HEK293T (cell line): ENCODE measurements at regions of chr17 and their contacts with region 1.

Region 1: DNA sequence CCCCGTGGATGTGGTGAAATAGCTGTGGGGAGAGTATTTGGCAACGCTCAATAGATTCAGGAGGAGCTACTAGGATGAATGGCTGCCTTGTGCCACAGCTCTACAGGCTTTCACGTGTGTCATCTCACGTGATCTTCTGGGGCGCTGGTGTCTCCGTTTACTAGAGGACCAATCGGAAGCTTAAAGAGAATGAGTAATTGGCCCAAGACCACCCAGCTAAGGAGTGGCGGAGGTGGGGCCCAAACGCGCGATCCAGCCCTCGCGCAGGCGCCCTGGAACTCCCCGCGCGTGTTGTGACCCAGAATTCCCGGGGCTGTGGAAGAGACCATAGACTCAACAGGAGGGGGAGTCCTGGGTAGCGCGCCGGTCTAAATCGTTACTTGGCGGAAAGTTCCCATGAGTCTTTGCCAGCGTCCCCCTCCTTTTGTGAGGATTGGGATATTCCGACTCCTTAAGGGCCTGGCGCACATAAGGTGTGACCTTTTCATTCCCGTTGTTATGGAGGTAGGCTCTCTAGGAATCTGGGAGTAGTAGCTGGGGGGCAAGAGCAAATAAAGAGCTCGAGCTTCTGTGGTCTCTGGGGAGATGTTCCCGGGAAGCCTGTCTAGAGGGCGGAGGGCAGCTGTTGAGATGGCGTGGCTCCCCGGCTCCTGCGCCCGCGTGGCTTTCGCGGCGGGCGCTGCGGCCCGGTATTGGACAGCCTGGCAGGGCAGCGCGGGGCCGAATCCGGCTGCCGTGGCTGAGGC is 23.4 kb downstream of the TRPV2 start:
- DNase-seq: peak; percentile 98

Region 2: GRCh38 chr17:16363749-16364536 is 74.8 kb before region 1 on chr17:
- CTCF ChIA-PET with region 1: interaction called, 9 read pairs
- POLR2A ChIA-PET with region 1: interaction called, 15 read pairs
- DNase-seq: peak; percentile 74

Region 3: DNA sequence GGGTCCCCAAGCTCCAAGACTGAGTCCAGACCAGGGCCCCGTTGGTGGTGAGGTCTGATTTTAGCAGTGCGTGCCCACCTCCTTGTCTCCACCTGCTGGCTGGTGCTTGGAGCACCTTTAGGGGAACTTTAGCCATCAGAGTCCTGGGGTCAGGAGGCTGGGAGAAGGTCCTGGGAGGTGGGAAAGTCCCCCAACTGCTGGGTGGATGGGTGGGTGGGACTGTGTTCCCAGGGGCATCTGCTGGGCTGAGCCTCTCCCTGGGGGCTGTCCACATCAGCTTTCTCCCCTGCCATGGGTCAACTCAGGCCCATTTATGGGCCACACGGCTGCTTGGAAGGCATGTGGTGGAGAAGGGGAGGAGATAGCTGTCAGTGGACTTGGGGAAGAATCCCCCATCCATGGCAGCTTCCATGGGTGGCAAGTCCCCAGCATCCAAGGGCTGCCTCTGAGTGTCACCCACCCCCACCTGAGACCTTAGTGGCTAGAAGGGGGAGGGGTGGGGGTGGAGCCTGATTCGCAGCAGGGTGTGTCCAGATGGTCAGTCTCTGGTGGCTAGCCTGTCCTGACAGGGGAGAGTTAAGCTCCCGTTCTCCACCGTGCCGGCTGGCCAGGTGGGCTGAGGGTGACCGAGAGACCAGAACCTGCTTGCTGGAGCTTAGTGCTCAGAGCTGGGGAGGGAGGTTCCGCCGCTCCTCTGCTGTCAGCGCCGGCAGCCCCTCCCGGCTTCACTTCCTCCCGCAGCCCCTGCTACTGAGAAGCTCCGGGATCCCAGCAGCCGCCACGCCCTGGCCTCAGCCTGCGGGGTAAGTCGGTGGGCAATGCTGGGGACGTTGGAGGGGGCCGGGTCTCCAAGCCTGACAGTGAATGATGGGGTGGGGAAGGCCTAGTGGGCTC is 23.5 kb before region 1 on chr17 and contains the start of gene TRPV2:
- CTCF ChIA-PET with region 1: no interaction called
- POLR2A ChIA-PET with region 1: interaction called, 104 read pairs
- DNase-seq: peak; percentile 54

Region 4: DNA sequence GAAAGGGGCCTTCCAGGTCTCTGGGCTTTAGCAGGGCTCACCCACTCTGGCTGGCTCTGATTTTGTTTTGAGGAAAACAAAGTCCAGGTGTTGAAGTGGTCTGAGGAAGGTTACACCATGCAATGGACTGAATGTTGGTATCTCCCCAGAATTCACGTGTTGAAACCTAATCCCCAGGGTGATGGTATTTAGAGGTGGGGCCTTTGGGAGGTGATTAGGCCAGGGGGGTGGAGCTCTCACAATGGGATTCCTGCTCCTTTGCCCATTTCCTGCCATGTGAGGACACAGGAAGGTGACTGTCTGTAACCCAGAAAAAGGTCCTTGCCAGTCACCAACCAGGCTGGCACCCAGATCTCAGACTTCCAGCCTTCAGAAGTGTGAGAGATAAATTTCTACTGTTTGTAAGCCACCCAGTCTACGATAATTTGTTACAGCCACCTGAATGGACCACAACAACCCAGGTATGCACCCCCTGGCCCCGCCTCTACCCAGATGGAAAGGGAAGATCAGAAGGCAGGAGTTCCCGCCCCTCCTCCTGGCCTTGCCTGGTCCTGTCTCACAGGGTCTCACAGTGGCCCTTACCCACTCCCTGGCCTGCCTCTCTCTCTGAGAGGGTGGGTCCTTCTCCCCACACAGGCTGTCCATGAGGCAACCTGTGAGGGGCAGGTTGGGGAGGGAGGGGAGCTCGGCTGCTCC is 21.3 kb after region 1 on chr17:
- CTCF ChIA-PET with region 1: no interaction called
- POLR2A ChIA-PET with region 1: interaction called, 107 read pairs
- DNase-seq: no peak

Region 5: DNA sequence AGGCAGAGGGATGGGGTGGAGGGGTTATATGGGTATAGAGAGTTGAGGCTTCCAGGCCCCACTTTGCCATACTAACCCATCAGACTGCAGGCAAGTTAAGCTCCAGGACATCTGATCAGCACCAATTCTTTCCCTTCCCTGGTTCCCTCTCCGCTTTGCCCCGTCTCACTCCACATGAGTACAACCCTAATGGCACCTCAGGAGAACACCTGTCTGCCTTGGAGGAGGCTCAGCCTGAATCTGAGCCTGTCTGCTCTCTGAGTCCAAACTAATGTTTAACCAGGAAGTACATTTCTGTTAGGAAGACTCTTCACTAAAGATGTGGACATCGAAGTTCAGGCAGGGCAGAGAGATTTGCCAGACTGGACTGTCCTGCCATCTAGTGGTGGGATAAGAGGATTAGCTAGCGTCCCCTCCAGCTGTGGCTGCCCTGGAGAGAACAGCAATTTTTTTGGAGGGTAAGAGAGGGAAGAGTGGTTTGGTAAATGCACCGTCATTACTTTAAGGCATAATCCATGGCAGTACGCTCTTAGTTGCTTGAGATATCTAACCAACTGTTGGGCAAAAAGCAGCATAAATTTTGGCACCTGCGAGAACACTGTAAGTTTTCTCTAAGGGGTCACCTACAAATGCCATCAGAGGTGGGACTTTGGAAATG is 82.5 kb after region 1 on chr17:
- CTCF ChIA-PET with region 1: interaction called, 3 read pairs
- POLR2A ChIA-PET with region 1: interaction called, 26 read pairs
- DNase-seq: peak; percentile 85

Region 6: DNA sequence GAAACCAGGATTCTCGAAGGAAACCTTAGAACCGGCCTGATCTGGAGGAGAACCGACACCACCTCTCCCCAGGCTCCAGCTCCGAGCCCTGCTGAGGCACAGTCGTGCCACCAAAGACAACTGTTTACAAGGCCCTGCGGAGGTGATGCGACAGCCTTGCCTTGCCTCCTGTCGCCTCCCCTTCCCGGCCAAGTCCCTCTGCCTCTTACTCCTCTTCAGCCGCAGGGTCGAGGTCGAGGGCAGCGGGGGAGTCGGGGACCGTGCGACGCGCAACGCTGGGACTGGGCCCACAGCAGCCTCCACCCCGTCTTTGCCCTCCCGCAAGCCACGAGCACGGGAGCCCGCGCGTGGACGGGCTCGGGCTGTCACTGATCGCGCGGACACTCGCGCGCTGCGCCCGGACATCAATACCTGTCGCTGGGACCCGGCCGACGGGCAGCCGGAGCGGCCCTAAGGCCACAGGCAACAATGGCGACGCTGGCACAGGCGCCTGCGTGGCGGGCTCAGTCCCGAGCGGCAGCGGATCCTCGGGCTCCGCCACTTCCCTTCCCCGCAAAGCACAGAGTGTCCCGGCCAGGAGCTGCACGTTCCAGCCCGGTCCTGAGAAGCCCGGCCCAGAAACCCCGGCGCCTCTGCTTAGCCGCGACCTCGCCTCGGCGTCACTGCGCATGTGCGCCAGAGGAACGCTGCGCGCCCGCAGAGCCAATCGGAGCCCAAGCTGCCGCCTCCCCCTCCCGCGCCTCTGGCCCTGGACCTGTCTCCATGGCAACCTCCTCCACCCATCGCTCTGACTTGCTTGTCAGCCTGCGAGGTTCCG is 130.0 kb after region 1 on chr17 and contains the start of gene ZNF287:
- CTCF ChIA-PET with region 1: no interaction called
- POLR2A ChIA-PET with region 1: no interaction called
- DNase-seq: peak; percentile 98